ENCODE measurements at regions of chr7 and their contacts with region 1.

Region 1: DNA sequence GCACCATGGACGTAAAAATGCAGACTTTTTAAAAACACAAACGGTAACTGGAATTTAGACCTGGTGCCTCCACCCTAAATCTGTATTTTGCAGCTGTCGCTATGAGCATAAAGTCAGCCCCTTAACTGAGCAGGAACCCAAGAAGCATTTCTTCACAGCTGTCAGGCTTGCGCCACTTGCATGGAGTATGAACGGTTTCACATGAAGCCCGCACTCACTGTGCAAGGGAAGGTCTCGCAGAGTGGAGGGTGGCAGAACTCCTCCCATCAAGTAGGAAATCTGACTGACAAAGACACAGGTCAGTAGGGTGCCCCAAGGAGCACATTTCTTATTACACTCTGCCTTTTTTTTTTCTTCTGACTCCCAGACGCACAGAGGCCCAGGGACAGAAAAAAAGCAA is 58.5 kb downstream of the ELMO1 start:
- DNase-seq: no peak
- H3K4me3 Mint-ChIP-seq: no peak overlapping the region
- H3K27ac Mint-ChIP-seq: no peak overlapping the region
- H3K4me1 Mint-ChIP-seq: no peaks in the 10 kb centered on the region
- H3K27me3 Mint-ChIP-seq: no peaks in the 10 kb centered on the region
- CTCF ChIP-seq: no peak

Region 2: DNA sequence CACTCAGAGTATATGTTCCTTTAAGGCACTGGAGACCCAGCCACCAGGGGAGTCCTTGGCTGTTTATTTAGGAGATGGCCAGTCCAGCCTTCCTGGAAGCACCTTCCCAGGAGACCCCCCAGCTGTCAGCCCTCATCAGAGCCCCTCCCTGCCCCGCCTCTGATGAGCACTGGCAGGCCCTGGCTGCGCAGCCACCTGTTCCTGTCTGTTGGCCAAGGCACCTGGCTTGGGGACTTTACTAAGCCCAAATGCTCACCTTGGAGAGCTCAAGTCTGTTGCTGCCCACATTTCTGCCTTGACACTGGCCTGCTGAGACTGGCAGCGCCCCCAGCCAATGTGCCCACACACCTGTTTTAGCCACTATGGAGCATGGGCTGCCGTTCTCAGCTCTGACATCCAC is 66.1 kb before region 1 on chr7:
- CTCF ChIA-PET with region 1: interaction called, 11 read pairs
- intact Hi-C with region 1: no loop called
- DNase-seq: no peak
- H3K4me3 Mint-ChIP-seq: no peak overlapping the region
- H3K27ac Mint-ChIP-seq: no peak overlapping the region
- H3K4me1 Mint-ChIP-seq: no peaks in the 10 kb centered on the region
- H3K27me3 Mint-ChIP-seq: no peaks in the 10 kb centered on the region
- CTCF ChIP-seq: no peak